ENCODE measurements at regions of chr17 and their contacts with region 1.

Region 1: GRCh38 chr17:73192894-73193701 is at the start of gene COG1:
- DNase-seq: peak; percentile 91
- total RNA-seq, gene COG1: 48.5 TPM

Region 2: GRCh38 chr17:72804949-72805707 is 388.0 kb before region 1 on chr17:
- intact Hi-C with region 1: no loop called
- DNase-seq: no peak

Region 3: DNA sequence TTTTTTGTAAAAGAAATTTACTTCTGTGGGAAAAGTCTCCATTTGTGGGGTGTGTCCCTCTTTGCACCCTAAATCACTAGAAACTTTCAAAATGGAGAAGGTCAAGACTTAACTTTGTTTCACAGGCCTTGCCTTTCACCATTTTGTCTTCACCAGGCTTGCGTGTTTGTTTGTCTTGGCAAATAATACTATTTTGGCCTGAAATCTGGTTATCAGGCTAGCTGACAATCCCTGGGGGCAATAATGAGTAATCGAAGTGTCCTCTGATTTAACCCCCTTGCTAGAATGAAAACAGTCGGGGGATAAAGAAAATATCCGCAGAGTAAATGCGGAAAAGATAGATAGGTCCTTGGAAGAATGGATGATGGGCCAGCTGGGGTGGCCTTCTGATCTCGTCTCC is 135.1 kb before region 1 on chr17:
- intact Hi-C with region 1: no loop called
- DNase-seq: no peak

Region 4: DNA sequence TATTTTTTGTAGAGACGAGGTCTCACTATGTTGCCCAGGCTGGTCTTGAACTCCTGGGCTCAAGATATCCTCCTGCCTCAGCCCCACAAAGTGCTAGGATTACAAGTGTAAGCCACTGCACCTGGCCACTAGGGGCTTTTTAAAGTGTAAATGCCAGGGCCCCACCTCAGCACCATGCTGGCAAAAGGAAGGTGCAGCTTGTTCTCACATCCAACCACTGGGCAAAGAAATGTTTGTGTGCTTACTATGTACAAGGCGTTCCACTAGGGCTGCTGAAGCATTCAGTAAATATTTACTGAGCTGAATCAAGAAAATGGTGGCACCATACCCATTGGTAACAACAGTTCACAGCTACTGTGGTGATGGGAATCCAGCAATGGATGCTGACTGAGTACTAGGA is 22.3 kb after region 1 on chr17:
- intact Hi-C with region 1: no loop called
- DNase-seq: no peak

Region 5: DNA sequence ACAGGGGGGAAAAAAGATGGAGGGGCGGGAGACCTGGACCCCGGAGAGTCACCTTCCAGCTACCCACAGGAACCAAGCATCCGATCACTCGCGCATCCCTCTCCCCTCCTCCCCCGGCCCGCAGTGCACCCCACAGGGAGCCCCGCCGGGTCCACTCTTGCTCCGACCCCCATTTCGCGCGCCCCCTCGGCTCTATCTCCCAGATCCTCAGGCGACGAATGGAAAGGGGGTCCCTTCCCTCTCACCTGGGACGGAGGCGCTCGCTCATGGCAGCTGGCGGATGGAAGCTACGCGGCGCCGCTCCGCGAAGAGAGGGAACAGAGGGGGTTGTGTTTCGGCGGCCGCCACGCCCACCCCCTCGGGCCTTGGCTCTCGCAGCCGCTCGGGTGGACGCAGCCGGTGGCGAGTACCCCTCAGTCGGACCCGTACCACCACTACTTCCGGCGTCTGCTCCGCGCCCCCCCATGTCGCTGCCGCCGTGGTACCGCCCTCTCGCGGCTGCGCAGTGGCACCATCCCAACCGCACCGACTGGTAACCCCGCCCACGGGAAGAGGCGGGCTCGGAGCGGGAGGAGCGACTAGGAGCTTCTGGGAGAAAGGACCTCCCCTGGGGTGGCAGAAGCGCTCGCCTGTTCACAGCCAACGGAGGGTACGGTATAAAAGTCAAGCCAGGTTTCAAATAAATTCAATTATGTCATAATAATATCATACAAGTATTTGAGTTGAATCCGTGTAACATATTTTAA is 38.9 kb after region 1 on chr17:
- intact Hi-C with region 1: loop called (anchors 2 kb)
- DNase-seq: peak; percentile 99

Region 6: DNA sequence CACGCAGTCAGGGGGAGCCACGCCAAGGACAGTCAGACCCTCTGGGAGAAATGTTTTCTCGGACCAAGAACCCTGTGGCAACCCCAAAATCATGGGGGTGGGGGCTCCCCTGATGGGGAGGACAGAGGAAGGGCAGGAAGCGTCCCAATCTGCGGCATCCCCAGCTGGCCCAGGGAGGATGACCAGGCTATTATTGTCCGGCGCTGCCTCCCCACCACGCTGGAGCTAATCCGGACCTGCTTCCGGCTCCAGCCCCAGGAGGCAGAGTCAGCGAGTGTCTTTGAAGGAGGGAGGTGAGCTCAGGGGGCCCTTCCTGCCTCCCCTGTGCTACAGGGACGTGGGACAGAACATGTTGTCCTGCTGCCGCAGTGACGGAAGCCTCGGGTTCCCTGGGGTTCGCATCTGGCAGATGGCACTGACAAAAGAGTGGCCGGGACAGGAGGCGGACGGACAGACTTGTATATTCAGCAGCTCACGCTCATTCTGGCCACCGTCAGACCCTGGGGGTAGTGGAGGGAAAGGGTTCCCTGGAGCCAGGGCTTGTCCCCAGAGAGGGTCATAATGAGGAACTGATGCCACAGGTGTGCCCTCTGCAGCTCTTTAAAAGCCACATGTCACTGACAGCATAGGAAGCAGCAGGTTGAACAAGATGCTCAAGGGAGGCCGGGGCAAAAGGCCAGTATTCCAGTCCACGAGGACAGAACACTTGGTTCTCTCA is 173.0 kb after region 1 on chr17:
- intact Hi-C with region 1: loop called (anchors 5 kb)
- DNase-seq: no peak

Measured in cardiac septum (tissue), 1 donor.